ENCODE measurements at regions of chr6 and their contacts with region 1.

Region 1: GRCh38 chr6:31042806-31043205 is 32.5 kb downstream of the MUC22 start:
- DNase-seq: peak; percentile 88
- H3K4me3 ChIP-seq: no peak overlapping the region
- H3K27ac ChIP-seq: no peak overlapping the region
- H3K4me1 ChIP-seq: no peaks in the 10 kb centered on the region
- H3K27me3 ChIP-seq: no peaks in the 10 kb centered on the region
- CTCF ChIP-seq: peak; percentile 76

Region 2: GRCh38 chr6:30626484-30627366 is 416.1 kb before region 1 on chr6 and contains the start of gene ATAT1:
- CTCF ChIA-PET with region 1: no interaction called
- POLR2A ChIA-PET with region 1: no interaction called
- intact Hi-C with region 1: no loop called
- DNase-seq: peak; percentile 92
- H3K4me3 ChIP-seq: peak within 1 kb of the TSS; percentile 82
- H3K27ac ChIP-seq: peak within 1 kb of the TSS; percentile 90
- H3K4me1 ChIP-seq: no peaks in the 10 kb centered on the region
- H3K27me3 ChIP-seq: no peaks in the 10 kb centered on the region
- CTCF ChIP-seq: peak; percentile 53
- total RNA-seq, gene ATAT1: 31.7 and 33.0 TPM in 2 replicates

Region 3: GRCh38 chr6:30914076-30914853 is 128.5 kb before region 1 on chr6 and contains the start of gene VARS2:
- CTCF ChIA-PET with region 1: interaction called, 10 read pairs
- POLR2A ChIA-PET with region 1: no interaction called
- intact Hi-C with region 1: loop called (anchors 2 kb)
- DNase-seq: peak; percentile 89
- H3K4me3 ChIP-seq: peak within 1 kb of the TSS; percentile 62
- H3K27ac ChIP-seq: peak within 1 kb of the TSS; percentile 75
- H3K4me1 ChIP-seq: peaks cover 13% of the 10 kb centered on the region
- H3K27me3 ChIP-seq: no peaks in the 10 kb centered on the region
- CTCF ChIP-seq: peak; percentile 40
- total RNA-seq, gene VARS2: 48.4 and 53.4 TPM in 2 replicates

Region 4: GRCh38 chr6:30942338-30943060 is 100.3 kb before region 1 on chr6:
- CTCF ChIA-PET with region 1: no interaction called
- POLR2A ChIA-PET with region 1: no interaction called
- intact Hi-C with region 1: loop called (anchors 1 kb)
- DNase-seq: peak; percentile 96
- H3K4me3 ChIP-seq: no peak overlapping the region
- H3K27ac ChIP-seq: peak overlapping the region; percentile 67
- H3K4me1 ChIP-seq: peaks cover 18% of the 10 kb centered on the region
- H3K27me3 ChIP-seq: no peaks in the 10 kb centered on the region
- CTCF ChIP-seq: peak; percentile 72